PC-3 (cell line): ENCODE measurements at regions of chr2 and their contacts with region 1.

Region 1: GRCh38 chr2:99154643-99155536 is at the starts of genes LIPT1 and TSGA10:
- DNase-seq: peak; percentile 89
- ATAC-seq: peak; percentile 90
- H3K4me3 ChIP-seq: peak within 1 kb of the TSS; percentile 92
- H3K27ac ChIP-seq: peak within 1 kb of the TSS; percentile 75
- H3K4me1 ChIP-seq: peaks cover 30% of the 10 kb centered on the region
- H3K27me3 ChIP-seq: no peaks in the 10 kb centered on the region
- CTCF ChIP-seq: peak; percentile 43; the same call in 1 of the 2 replicates
- total RNA-seq, gene LIPT1: 6.7 and 8.7 TPM in 2 replicates
- total RNA-seq, gene TSGA10: 3.6 and 8.9 TPM in 2 replicates

Region 2: GRCh38 chr2:99072551-99072950 is 82.3 kb before region 1 on chr2:
- CTCF ChIA-PET with region 1: no interaction called
- POLR2A ChIA-PET with region 1: no interaction called
- intact Hi-C with region 1: no loop called
- DNase-seq: no peak
- ATAC-seq: no peak
- H3K4me3 ChIP-seq: no peak overlapping the region
- H3K27ac ChIP-seq: no peak overlapping the region
- H3K4me1 ChIP-seq: no peaks in the 10 kb centered on the region
- H3K27me3 ChIP-seq: no peaks in the 10 kb centered on the region
- CTCF ChIP-seq: no peak

Region 3: GRCh38 chr2:99085421-99085820 is 69.5 kb before region 1 on chr2:
- CTCF ChIA-PET with region 1: no interaction called
- POLR2A ChIA-PET with region 1: no interaction called
- intact Hi-C with region 1: loop called (anchors 10 kb)
- DNase-seq: peak; percentile 24
- ATAC-seq: peak; percentile 50; the same call in 1 of the 2 replicates
- H3K4me3 ChIP-seq: no peak overlapping the region
- H3K27ac ChIP-seq: no peak overlapping the region
- H3K4me1 ChIP-seq: no peaks in the 10 kb centered on the region
- H3K27me3 ChIP-seq: no peaks in the 10 kb centered on the region
- CTCF ChIP-seq: peak; percentile 56

Region 4: GRCh38 chr2:99141110-99142108 is 13.5 kb before region 1 on chr2 and contains the start of gene C2orf15:
- CTCF ChIA-PET with region 1: interaction called, 9 read pairs
- POLR2A ChIA-PET with region 1: interaction called, 3 read pairs
- intact Hi-C with region 1: loop called (anchors 2 kb)
- DNase-seq: peak; percentile 93
- ATAC-seq: peak; percentile 87
- H3K4me3 ChIP-seq: peak within 1 kb of the TSS; percentile 88
- H3K27ac ChIP-seq: peak within 1 kb of the TSS; percentile 48
- H3K4me1 ChIP-seq: peaks cover 20% of the 10 kb centered on the region
- H3K27me3 ChIP-seq: no peaks in the 10 kb centered on the region
- CTCF ChIP-seq: no peak
- total RNA-seq, gene C2orf15: 3.3 and 4.4 TPM in 2 replicates

Region 5: DNA sequence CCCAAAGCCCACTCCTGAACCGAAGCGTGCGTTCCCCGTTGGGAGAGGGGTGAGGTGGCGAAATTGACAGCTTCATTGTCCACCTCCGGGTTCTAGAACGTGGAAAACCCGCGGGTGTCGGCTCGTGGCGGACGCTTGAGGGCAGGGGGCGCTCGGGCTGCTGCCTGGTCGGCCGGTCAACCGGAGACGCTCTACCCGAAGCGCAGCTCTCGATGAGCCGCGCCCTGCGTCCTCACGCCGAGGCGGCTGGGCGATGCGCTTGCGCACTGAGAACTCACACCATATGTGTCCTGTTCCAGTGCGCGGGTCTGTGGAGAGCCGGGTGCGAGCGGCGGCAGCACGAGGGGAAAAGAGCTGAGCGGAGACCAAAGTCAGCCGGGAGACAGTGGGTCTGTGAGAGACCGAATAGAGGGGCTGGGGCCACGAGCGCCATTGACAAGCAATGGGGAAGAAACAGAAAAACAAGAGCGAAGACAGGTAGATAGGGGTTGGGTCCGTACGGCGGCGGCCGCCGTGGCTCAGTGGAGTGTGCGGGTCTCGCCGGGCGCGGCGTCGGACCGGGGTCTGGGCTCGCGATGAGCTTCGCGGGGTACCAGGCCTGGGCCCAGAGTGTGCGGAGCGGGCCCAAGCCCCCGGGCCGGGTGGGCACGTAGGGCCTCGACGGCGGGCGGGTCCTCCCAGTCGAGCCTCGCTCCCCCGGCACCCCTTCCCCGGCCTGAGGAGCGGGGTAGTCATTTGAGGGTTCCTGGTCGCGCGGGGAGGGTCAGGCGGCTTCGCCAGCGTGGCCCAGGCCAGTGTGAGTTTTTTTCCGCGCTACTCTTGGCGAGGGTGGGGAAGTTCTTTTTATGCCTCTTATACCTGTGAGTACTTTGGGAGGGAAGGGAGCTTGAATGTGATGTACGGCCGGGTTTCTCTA is 182.5 kb after region 1 on chr2 and contains the start of gene EIF5B:
- CTCF ChIA-PET with region 1: no interaction called
- POLR2A ChIA-PET with region 1: no interaction called
- intact Hi-C with region 1: loop called (anchors 1 kb)
- DNase-seq: peak; percentile 98
- ATAC-seq: peak; percentile 78
- H3K4me3 ChIP-seq: peak within 1 kb of the TSS; percentile 81
- H3K27ac ChIP-seq: peak within 1 kb of the TSS; percentile 73
- H3K4me1 ChIP-seq: peaks cover 34% of the 10 kb centered on the region
- H3K27me3 ChIP-seq: no peaks in the 10 kb centered on the region
- CTCF ChIP-seq: peak; percentile 83
- total RNA-seq, gene EIF5B: 35.7 and 35.9 TPM in 2 replicates

Region 6: GRCh38 chr2:99354070-99354469 is 199.2 kb after region 1 on chr2:
- CTCF ChIA-PET with region 1: no interaction called
- POLR2A ChIA-PET with region 1: no interaction called
- intact Hi-C with region 1: no loop called
- DNase-seq: peak; percentile 17
- ATAC-seq: no peak
- H3K4me3 ChIP-seq: no peak overlapping the region
- H3K27ac ChIP-seq: no peak overlapping the region
- H3K4me1 ChIP-seq: no peaks in the 10 kb centered on the region
- H3K27me3 ChIP-seq: no peaks in the 10 kb centered on the region
- CTCF ChIP-seq: no peak

Region 7: DNA sequence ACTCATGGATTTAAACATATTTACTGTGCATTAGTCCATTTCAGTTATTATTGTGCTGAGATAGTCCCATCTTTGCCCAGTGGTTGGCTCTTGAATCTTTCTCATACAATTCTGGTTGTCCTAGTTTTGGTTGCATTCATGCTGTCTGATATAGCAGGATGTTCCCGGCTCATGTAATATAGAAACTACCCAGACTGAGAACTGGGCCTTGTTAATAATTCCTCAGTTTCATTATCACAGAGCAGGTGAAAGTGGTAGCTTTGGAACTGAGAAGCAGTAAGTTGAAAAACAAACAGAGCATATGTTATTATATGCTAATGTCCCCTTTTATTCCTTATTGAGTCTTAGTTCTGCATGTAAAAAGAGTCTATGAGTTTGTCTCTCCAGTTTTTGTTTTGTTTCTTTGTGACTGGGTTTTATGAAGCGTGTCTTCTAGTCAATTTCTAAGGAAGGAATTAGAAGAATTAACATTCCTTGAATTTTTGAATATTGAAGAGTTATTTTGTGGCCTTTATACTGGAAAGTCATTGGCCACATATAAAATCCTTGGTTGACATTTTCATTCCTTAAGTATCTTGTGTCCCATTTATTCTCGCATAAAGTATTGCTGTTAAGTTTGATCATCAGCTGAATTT is 225.6 kb after region 1 on chr2:
- CTCF ChIA-PET with region 1: no interaction called
- POLR2A ChIA-PET with region 1: no interaction called
- intact Hi-C with region 1: no loop called
- DNase-seq: no peak
- ATAC-seq: no peak
- H3K4me3 ChIP-seq: no peak overlapping the region
- H3K27ac ChIP-seq: no peak overlapping the region
- H3K4me1 ChIP-seq: peaks cover under 1% of the 10 kb centered on the region; the same call in 1 of the 2 replicates
- H3K27me3 ChIP-seq: no peaks in the 10 kb centered on the region
- CTCF ChIP-seq: no peak